PC-9 (cell line): ENCODE measurements at regions of chrX and their contacts with region 1.

Region 1: GRCh38 chrX:68307769-68308168 is 125.5 kb downstream of the OPHN1 start:
- DNase-seq: peak; percentile 9 to 94
- H3K4me3 ChIP-seq: no peak overlapping the region
- H3K27ac ChIP-seq: peak overlapping the region; percentile 93
- H3K4me1 ChIP-seq: peaks cover 33% of the 10 kb centered on the region
- H3K27me3 ChIP-seq: no peaks in the 10 kb centered on the region
- CTCF ChIP-seq: no peak

Region 2: GRCh38 chrX:68261060-68261672 is 46.6 kb before region 1 on chrX:
- CTCF ChIA-PET with region 1: no interaction called
- POLR2A ChIA-PET with region 1: no interaction called
- intact Hi-C with region 1: no loop called
- DNase-seq: no peak
- H3K4me3 ChIP-seq: no peak overlapping the region
- H3K27ac ChIP-seq: no peak overlapping the region
- H3K4me1 ChIP-seq: no peaks in the 10 kb centered on the region
- H3K27me3 ChIP-seq: no peaks in the 10 kb centered on the region
- CTCF ChIP-seq: no peak

Region 3: DNA sequence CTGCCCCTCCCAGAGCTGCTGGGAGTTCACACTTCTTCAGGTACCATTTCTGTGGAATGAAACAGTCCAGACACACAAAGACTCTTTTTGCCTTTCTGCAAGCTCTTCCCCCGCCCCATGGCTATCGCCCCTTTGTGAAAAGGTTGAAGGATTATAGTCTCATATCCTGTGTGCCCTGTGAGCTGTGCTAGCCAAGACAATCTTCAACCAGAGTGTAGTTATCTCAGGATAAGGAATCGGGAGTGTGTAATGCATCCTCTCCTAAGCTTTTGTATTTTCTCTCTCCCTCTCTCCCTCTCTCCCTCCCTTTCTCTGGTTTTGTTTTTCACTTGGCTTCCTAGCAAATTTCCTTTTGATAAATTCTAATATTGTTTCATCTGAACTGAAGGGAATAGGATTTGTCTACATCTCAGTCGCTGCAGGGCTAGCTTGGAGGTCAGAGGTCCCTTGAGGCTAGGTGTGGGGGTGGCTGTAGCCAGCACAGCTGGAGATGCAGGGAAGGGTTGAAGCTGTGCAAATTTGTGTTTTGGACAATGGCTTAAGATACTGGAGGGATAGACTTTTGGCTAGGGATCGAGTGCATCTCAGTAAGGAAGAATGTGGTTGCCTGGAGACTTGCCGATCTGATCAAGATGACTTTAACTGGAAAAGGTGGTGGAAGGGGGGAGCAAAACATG is 1121.7 kb after region 1 on chrX:
- CTCF ChIA-PET with region 1: interaction called, 11 read pairs
- POLR2A ChIA-PET with region 1: no interaction called
- intact Hi-C with region 1: no loop called
- DNase-seq: no peak
- H3K4me3 ChIP-seq: no peak overlapping the region
- H3K27ac ChIP-seq: no peak overlapping the region
- H3K4me1 ChIP-seq: no peaks in the 10 kb centered on the region
- H3K27me3 ChIP-seq: peaks cover 15% of the 10 kb centered on the region; the same call in 1 of the 2 replicates
- CTCF ChIP-seq: no peak